GM12878 (cell line): ENCODE measurements at regions of chr10 and their contacts with region 1.

Region 1: GRCh38 chr10:90912174-90912573 is 8.7 kb downstream of the ANKRD1 start:
- DNase-seq: no peak
- ATAC-seq: no peak
- H3K4me3 ChIP-seq: no peak overlapping the region
- H3K27ac ChIP-seq: no peak overlapping the region
- H3K4me1 ChIP-seq: no peaks in the 10 kb centered on the region
- H3K27me3 ChIP-seq: no peaks in the 10 kb centered on the region
- CTCF ChIP-seq: no peak
- EP300 ChIP-seq: no peak
- POLR2A ChIP-seq: no peak
- RAD21 ChIP-seq: no peak

Region 2: GRCh38 chr10:90642136-90642535 is 270.0 kb before region 1 on chr10:
- CTCF ChIA-PET with region 1: no interaction called
- POLR2A ChIA-PET with region 1: no interaction called
- RAD21 ChIA-PET with region 1: no interaction called
- SMC1A ChIA-PET with region 1: no interaction called
- in situ Hi-C with region 1: no loop called
- intact Hi-C with region 1: no loop called
- DNase-seq: no peak
- ATAC-seq: no peak
- H3K4me3 ChIP-seq: no peak overlapping the region
- H3K27ac ChIP-seq: no peak overlapping the region
- H3K4me1 ChIP-seq: no peaks in the 10 kb centered on the region
- H3K27me3 ChIP-seq: no peaks in the 10 kb centered on the region
- CTCF ChIP-seq: no peak
- EP300 ChIP-seq: no peak
- POLR2A ChIP-seq: no peak
- RAD21 ChIP-seq: no peak

Region 3: GRCh38 chr10:90665905-90666662 is 246.1 kb before region 1 on chr10:
- CTCF ChIA-PET with region 1: no interaction called
- POLR2A ChIA-PET with region 1: no interaction called
- RAD21 ChIA-PET with region 1: no interaction called
- SMC1A ChIA-PET with region 1: no interaction called
- in situ Hi-C with region 1: no loop called
- intact Hi-C with region 1: no loop called
- DNase-seq: no peak
- ATAC-seq: no peak
- H3K4me3 ChIP-seq: no peak overlapping the region
- H3K27ac ChIP-seq: no peak overlapping the region
- H3K4me1 ChIP-seq: no peaks in the 10 kb centered on the region
- H3K27me3 ChIP-seq: no peaks in the 10 kb centered on the region
- CTCF ChIP-seq: no peak
- EP300 ChIP-seq: no peak
- POLR2A ChIP-seq: no peak
- RAD21 ChIP-seq: no peak

Region 4: GRCh38 chr10:90977162-90977854 is 65.1 kb after region 1 on chr10:
- CTCF ChIA-PET with region 1: interaction called, 18 read pairs
- POLR2A ChIA-PET with region 1: no interaction called
- RAD21 ChIA-PET with region 1: interaction called, 3 read pairs
- SMC1A ChIA-PET with region 1: interaction called, 4 read pairs
- in situ Hi-C with region 1: no loop called
- intact Hi-C with region 1: no loop called
- DNase-seq: peak; percentile 76
- ATAC-seq: peak; percentile 91
- H3K4me3 ChIP-seq: no peak overlapping the region
- H3K27ac ChIP-seq: peak overlapping the region; percentile 74
- H3K4me1 ChIP-seq: peaks cover 10% of the 10 kb centered on the region
- H3K27me3 ChIP-seq: no peaks in the 10 kb centered on the region
- CTCF ChIP-seq: no peak
- EP300 ChIP-seq: no peak
- POLR2A ChIP-seq: no peak
- RAD21 ChIP-seq: no peak

Region 5: GRCh38 chr10:91043173-91043910 is 131.2 kb after region 1 on chr10:
- CTCF ChIA-PET with region 1: interaction called, 14 read pairs
- POLR2A ChIA-PET with region 1: no interaction called
- RAD21 ChIA-PET with region 1: interaction called, 3 read pairs
- SMC1A ChIA-PET with region 1: interaction called, 8 read pairs
- in situ Hi-C with region 1: no loop called
- intact Hi-C with region 1: no loop called
- DNase-seq: peak; percentile 3
- ATAC-seq: peak; percentile 66
- H3K4me3 ChIP-seq: no peak overlapping the region
- H3K27ac ChIP-seq: no peak overlapping the region
- H3K4me1 ChIP-seq: peaks cover under 1% of the 10 kb centered on the region; the same call in 1 of the 2 replicates
- H3K27me3 ChIP-seq: no peaks in the 10 kb centered on the region
- CTCF ChIP-seq: peak; percentile 18 to 51 (median 28); a peak in 3 of 6 replicates
- EP300 ChIP-seq: no peak
- POLR2A ChIP-seq: no peak
- RAD21 ChIP-seq: peak; percentile 50

Region 6: DNA sequence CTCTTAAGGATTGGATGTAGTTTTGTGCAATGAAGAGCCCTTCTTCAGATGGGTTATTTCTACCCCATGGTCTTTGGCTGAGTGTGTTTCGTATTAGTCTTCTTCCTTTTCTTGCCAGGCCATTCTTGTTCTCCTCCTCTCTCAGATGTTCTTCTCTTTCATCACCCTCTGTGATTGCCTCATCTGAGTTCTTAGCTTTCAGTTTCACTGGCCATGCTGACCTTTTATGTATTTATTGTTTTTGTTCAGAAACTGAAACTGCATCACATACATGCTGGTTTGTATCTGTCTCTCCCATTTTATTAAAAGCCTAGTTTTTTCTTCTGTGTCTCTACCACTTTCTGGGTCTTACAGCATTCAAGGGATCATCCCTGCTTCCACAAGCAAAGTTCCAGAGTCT is 286.6 kb after region 1 on chr10:
- CTCF ChIA-PET with region 1: interaction called, 4 read pairs
- POLR2A ChIA-PET with region 1: no interaction called
- RAD21 ChIA-PET with region 1: interaction called, 12 read pairs
- SMC1A ChIA-PET with region 1: interaction called, 4 read pairs
- in situ Hi-C with region 1: no loop called
- intact Hi-C with region 1: no loop called
- DNase-seq: peak; percentile 68
- ATAC-seq: peak; percentile 70
- H3K4me3 ChIP-seq: peak overlapping the region; percentile 53
- H3K27ac ChIP-seq: peak overlapping the region; percentile 61
- H3K4me1 ChIP-seq: peaks cover 47% of the 10 kb centered on the region
- H3K27me3 ChIP-seq: no peaks in the 10 kb centered on the region
- CTCF ChIP-seq: no peak
- EP300 ChIP-seq: peak in 1 of 2 experiments; percentile 15; a peak in 1 of 4 replicates
- POLR2A ChIP-seq: no peak
- RAD21 ChIP-seq: no peak

Region 7: GRCh38 chr10:91257310-91257709 is 345.1 kb after region 1 on chr10:
- CTCF ChIA-PET with region 1: interaction called, 253 read pairs
- POLR2A ChIA-PET with region 1: no interaction called
- RAD21 ChIA-PET with region 1: interaction called, 184 read pairs
- SMC1A ChIA-PET with region 1: interaction called, 202 read pairs
- in situ Hi-C with region 1: no loop called
- intact Hi-C with region 1: no loop called
- DNase-seq: no peak
- ATAC-seq: no peak
- H3K4me3 ChIP-seq: no peak overlapping the region
- H3K27ac ChIP-seq: no peak overlapping the region
- H3K4me1 ChIP-seq: no peaks in the 10 kb centered on the region
- H3K27me3 ChIP-seq: no peaks in the 10 kb centered on the region
- CTCF ChIP-seq: no peak
- EP300 ChIP-seq: no peak
- POLR2A ChIP-seq: no peak
- RAD21 ChIP-seq: no peak

Region 8: GRCh38 chr10:91298224-91298871 is 386.2 kb after region 1 on chr10:
- CTCF ChIA-PET with region 1: interaction called, 31 read pairs
- POLR2A ChIA-PET with region 1: no interaction called
- RAD21 ChIA-PET with region 1: interaction called, 32 read pairs
- SMC1A ChIA-PET with region 1: interaction called, 17 read pairs
- in situ Hi-C with region 1: no loop called
- intact Hi-C with region 1: loop called (anchors 2 kb)
- DNase-seq: no peak
- ATAC-seq: peak; percentile 93
- H3K4me3 ChIP-seq: peak overlapping the region; percentile 46; the same call in 1 of the 2 replicates
- H3K27ac ChIP-seq: no peak overlapping the region
- H3K4me1 ChIP-seq: peaks cover 5% of the 10 kb centered on the region; the same call in 1 of the 2 replicates
- H3K27me3 ChIP-seq: no peaks in the 10 kb centered on the region
- CTCF ChIP-seq: peak; percentile 90 to 97 (median 90)
- EP300 ChIP-seq: no peak
- POLR2A ChIP-seq: no peak
- RAD21 ChIP-seq: peak; percentile 93